Gastrocnemius medialis (tissue), 4 donors: ENCODE measurements at regions of chr9 and their contacts with region 1.

Region 1: GRCh38 chr9:19102631-19103345 is at the start of gene HAUS6:
- DNase-seq: peak; percentile 95 to 97
- ATAC-seq: peak; percentile 97 to 99
- H3K4me3 ChIP-seq: peak within 1 kb of the TSS; percentile 66 to 92 (median 82)
- H3K27ac ChIP-seq: peak within 1 kb of the TSS; percentile 78 to 96 (median 92)
- H3K4me1 ChIP-seq: peaks cover 19 to 21% of the 10 kb centered on the region in 2 donors
- H3K27me3 ChIP-seq: no peaks in the 10 kb centered on the region
- CTCF ChIP-seq: peak; percentile 67 to 80 (median 73)
- POLR2A ChIP-seq: peak; percentile 67 to 71
- total RNA-seq, gene HAUS6: 3.7 to 6.3 (median 5.3) TPM

Region 2: GRCh38 chr9:19161257-19162025 is 58.7 kb after region 1 on chr9:
- in situ Hi-C with region 1: loop called in 2 of 4 experiments (anchors 10 kb)
- intact Hi-C with region 1: no loop called
- DNase-seq: peak; percentile 72 to 77
- ATAC-seq: peak; percentile 93 to 97
- H3K4me3 ChIP-seq: no peak overlapping the region
- H3K27ac ChIP-seq: peak overlapping the region; percentile 72 to 90 (median 88)
- H3K4me1 ChIP-seq: peaks cover 15 to 18% of the 10 kb centered on the region in 2 donors
- H3K27me3 ChIP-seq: no peaks in the 10 kb centered on the region
- CTCF ChIP-seq: no peak
- POLR2A ChIP-seq: no peak

Region 3: DNA sequence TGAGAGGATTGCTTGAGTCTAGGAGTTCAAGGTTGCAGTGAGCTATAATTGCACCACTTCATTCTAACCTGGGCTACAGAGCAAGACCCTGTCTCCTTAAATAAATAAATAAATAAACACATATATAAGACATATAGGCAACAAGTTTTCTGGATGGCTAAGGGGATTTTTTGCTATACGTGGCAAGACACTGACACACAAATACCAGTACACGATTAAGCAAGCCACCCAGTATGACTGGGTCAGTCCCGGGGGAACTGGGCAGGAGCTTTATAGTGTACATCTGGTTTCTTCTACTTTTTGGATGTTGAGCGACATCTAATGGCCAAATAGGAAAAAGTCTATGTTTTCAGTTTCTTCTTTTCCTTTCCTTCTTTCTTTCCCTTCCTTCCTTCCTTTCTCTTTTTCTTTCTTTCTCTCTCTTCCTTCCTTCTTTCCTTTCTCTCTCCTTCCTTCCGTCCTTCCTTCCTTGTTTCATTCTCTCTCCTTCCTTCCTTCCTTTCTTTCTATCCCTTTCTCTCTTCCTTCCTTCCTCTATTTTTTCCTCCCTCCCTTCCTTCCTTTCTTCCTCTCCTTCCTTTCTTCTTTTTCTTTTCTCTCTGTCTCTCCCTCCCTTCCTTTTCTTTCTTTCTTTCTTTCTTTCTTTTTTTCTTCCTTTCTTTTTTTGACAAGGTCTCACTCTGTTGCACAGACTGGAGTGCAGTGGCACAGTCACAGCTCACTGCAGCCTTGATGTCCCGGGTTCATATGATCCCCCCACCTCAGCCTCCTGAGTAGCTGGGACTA is 71.5 kb after region 1 on chr9:
- in situ Hi-C with region 1: loop called in 2 of 4 experiments (anchors 10 kb)
- intact Hi-C with region 1: loop called (anchors 5 kb)
- DNase-seq: peak; percentile 62 to 83
- ATAC-seq: peak; percentile 95 to 99
- H3K4me3 ChIP-seq: no peak overlapping the region
- H3K27ac ChIP-seq: peak overlapping the region in 1 of 4 donors; percentile 28
- H3K4me1 ChIP-seq: peaks cover 4 to 15% of the 10 kb centered on the region in 2 donors
- H3K27me3 ChIP-seq: no peaks in the 10 kb centered on the region
- CTCF ChIP-seq: peak in 4 of 5 experiments; percentile 51 to 70 (median 54)
- POLR2A ChIP-seq: no peak

Region 4: GRCh38 chr9:19184144-19184917 is 81.5 kb after region 1 on chr9:
- in situ Hi-C with region 1: loop called in 1 of 4 experiments (anchors 5 kb)
- intact Hi-C with region 1: no loop called
- DNase-seq: peak; percentile 70 to 75
- ATAC-seq: peak; percentile 81 to 95
- H3K4me3 ChIP-seq: no peak overlapping the region
- H3K27ac ChIP-seq: peak overlapping the region; percentile 69 to 79 (median 76)
- H3K4me1 ChIP-seq: peaks cover 16% of the 10 kb centered on the region in 2 donors
- H3K27me3 ChIP-seq: no peaks in the 10 kb centered on the region
- CTCF ChIP-seq: no peak
- POLR2A ChIP-seq: peak in 1 of 2 donors; percentile 47

Region 5: GRCh38 chr9:19379697-19380046 is 276.9 kb after region 1 on chr9:
- in situ Hi-C with region 1: no loop called
- intact Hi-C with region 1: loop called (anchors 5 kb)
- DNase-seq: peak in 1 of 2 donors; percentile 9
- ATAC-seq: peak; percentile 43 to 56
- H3K4me3 ChIP-seq: peak overlapping the region; percentile 79 to 93 (median 90)
- H3K27ac ChIP-seq: peak overlapping the region; percentile 89 to 97 (median 95)
- H3K4me1 ChIP-seq: peaks cover 21 to 27% of the 10 kb centered on the region in 2 donors
- H3K27me3 ChIP-seq: no peaks in the 10 kb centered on the region
- CTCF ChIP-seq: no peak
- POLR2A ChIP-seq: no peak

Region 6: GRCh38 chr9:19641046-19641445 is 538.3 kb after region 1 on chr9:
- in situ Hi-C with region 1: no loop called
- intact Hi-C with region 1: no loop called
- DNase-seq: no peak
- ATAC-seq: no peak
- H3K4me3 ChIP-seq: no peak overlapping the region
- H3K27ac ChIP-seq: no peak overlapping the region
- H3K4me1 ChIP-seq: no peaks in the 10 kb centered on the region
- H3K27me3 ChIP-seq: no peaks in the 10 kb centered on the region
- CTCF ChIP-seq: no peak
- POLR2A ChIP-seq: no peak